ENCODE measurements at regions of chr3 and their contacts with region 1.

Region 1: GRCh38 chr3:32143849-32144757 is 37.7 kb downstream of the GPD1L start:
- DNase-seq: peak; percentile 25
- H3K4me3 Mint-ChIP-seq: no peak overlapping the region
- H3K27ac Mint-ChIP-seq: no peak overlapping the region
- H3K4me1 Mint-ChIP-seq: peaks cover 6% of the 10 kb centered on the region
- H3K27me3 Mint-ChIP-seq: no peaks in the 10 kb centered on the region

Region 2: GRCh38 chr3:31610700-31611275 is 533.3 kb before region 1 on chr3:
- intact Hi-C with region 1: loop called (anchors 10 kb)
- DNase-seq: no peak
- H3K4me3 Mint-ChIP-seq: no peak overlapping the region
- H3K27ac Mint-ChIP-seq: no peak overlapping the region
- H3K4me1 Mint-ChIP-seq: peaks cover 33% of the 10 kb centered on the region
- H3K27me3 Mint-ChIP-seq: no peaks in the 10 kb centered on the region

Region 3: GRCh38 chr3:32018757-32019564 is 125.1 kb before region 1 on chr3:
- intact Hi-C with region 1: loop called (anchors 1 kb)
- DNase-seq: no peak
- H3K4me3 Mint-ChIP-seq: no peak overlapping the region
- H3K27ac Mint-ChIP-seq: no peak overlapping the region
- H3K4me1 Mint-ChIP-seq: peaks cover 3% of the 10 kb centered on the region
- H3K27me3 Mint-ChIP-seq: peaks cover 7% of the 10 kb centered on the region

Region 4: DNA sequence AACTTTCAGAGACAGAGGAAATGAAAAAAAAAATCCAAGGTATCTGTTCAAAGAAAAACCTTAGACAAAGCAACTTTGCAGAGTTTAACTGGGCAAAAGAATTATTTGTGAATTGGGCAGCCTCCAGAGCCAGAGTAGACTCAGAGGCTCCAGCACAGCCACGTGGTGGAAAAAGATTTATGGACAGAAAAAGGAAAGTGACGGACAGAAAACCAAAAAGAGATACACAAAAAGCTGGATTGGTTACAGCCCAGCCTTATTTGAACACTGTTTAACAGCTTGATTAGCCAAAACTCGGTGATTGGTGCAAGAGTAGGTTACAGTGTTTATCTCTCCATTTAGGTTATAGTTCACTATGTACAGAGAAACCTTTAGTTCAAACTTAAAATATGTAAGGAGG is 61.4 kb before region 1 on chr3:
- intact Hi-C with region 1: no loop called
- DNase-seq: no peak
- H3K4me3 Mint-ChIP-seq: no peak overlapping the region
- H3K27ac Mint-ChIP-seq: no peak overlapping the region
- H3K4me1 Mint-ChIP-seq: no peaks in the 10 kb centered on the region
- H3K27me3 Mint-ChIP-seq: peaks cover 36% of the 10 kb centered on the region